CD8-positive, alpha-beta T cell (primary cell): ENCODE measurements at regions of chr10 and their contacts with region 1.

Region 1: DNA sequence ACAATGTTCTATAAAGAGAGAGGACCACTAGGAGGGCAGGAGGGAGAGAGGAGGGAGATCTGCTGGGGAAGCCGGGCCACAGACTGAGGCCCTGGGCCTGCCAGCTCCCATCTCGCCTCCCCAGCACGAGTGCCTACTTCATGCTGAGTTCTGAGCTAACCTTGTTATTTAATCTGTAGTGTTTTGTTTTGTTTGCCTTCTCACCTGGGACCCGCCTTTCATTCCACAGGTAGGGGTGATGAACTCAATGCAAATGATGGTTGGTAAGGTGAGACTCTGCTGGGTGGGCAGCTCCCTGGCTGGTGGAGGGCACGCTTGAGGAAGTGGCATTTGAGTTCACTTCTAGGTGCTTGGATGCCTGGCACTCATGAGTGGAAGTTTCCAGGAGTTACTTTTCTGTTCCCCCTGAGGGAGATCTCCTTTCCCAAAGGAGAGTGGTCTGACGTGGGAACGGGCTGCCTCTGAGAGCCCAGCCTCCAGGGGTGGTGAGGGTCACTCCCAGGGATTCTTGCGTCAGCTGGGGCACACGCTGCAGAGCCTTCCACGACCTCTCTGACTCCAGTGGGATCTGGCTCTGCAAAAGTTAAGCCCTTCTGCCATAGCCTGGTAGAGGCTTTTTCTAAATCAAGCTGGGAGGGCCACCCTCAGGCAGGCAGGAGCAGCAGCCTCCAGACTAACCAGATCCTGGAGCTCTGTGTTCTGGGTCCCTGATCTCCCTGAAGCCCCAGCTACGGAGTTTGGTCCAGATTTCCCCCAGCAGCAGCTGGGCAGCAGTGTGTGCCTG is 22.4 kb downstream of the UBTD1 start:
- DNase-seq: no peak
- ATAC-seq: no peak
- H3K4me3 ChIP-seq: no peak overlapping the region
- H3K4me3 Mint-ChIP-seq: no peak overlapping the region
- H3K27ac ChIP-seq: no peak overlapping the region
- H3K27ac Mint-ChIP-seq: no peak overlapping the region
- H3K4me1 ChIP-seq: no peaks in the 10 kb centered on the region
- H3K4me1 Mint-ChIP-seq: no peaks in the 10 kb centered on the region
- H3K27me3 ChIP-seq: peaks cover 0 to 2% of the 10 kb centered on the region in 2 experiments
- H3K27me3 Mint-ChIP-seq: no peaks in the 10 kb centered on the region
- CTCF ChIP-seq: no peak

Region 2: GRCh38 chr10:97059006-97059871 is 461.9 kb before region 1 on chr10:
- CTCF ChIA-PET with region 1: no interaction called
- POLR2A ChIA-PET with region 1: no interaction called
- intact Hi-C with region 1: loop called in 1 of 2 experiments (anchors 5 kb)
- DNase-seq: no peak
- ATAC-seq: no peak
- H3K4me3 ChIP-seq: no peak overlapping the region
- H3K4me3 Mint-ChIP-seq: no peak overlapping the region
- H3K27ac ChIP-seq: no peak overlapping the region
- H3K27ac Mint-ChIP-seq: no peak overlapping the region
- H3K4me1 ChIP-seq: no peaks in the 10 kb centered on the region
- H3K4me1 Mint-ChIP-seq: no peaks in the 10 kb centered on the region
- H3K27me3 ChIP-seq: no peaks in the 10 kb centered on the region
- H3K27me3 Mint-ChIP-seq: no peaks in the 10 kb centered on the region
- CTCF ChIP-seq: no peak

Region 3: DNA sequence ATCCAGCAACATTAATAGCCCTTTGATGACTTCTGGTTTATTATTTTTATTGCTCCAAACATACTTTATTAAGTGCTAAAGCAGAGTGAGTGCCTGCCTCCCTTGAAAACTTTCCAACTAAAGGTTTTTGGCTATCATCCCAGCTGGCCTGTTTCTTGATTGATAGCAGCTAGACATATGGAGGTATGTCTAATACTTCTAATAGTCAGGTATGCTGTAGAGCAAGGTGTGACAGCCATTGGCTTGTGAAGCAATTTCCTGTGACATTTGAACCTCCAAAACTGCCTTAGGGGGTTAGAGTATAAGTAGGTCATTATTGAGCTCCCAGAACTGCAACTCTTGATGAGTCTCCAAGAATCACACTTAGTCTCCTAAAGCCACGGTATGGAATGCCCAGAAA is 691.0 kb after region 1 on chr10:
- CTCF ChIA-PET with region 1: no interaction called
- POLR2A ChIA-PET with region 1: no interaction called
- intact Hi-C with region 1: no loop called
- DNase-seq: no peak
- ATAC-seq: no peak
- H3K4me3 ChIP-seq: no peak overlapping the region
- H3K4me3 Mint-ChIP-seq: no peak overlapping the region
- H3K27ac ChIP-seq: no peak overlapping the region
- H3K27ac Mint-ChIP-seq: no peak overlapping the region
- H3K4me1 ChIP-seq: no peaks in the 10 kb centered on the region
- H3K4me1 Mint-ChIP-seq: peaks cover 39% of the 10 kb centered on the region
- H3K27me3 ChIP-seq: no peaks in the 10 kb centered on the region
- H3K27me3 Mint-ChIP-seq: no peaks in the 10 kb centered on the region
- CTCF ChIP-seq: no peak